Activated CD4-positive, alpha-beta memory T cell treated with anti-CD3 and anti-CD28 coated beads for 36 hours (primary cell): ENCODE measurements at regions of chr17 and their contacts with region 1.

Region 1: DNA sequence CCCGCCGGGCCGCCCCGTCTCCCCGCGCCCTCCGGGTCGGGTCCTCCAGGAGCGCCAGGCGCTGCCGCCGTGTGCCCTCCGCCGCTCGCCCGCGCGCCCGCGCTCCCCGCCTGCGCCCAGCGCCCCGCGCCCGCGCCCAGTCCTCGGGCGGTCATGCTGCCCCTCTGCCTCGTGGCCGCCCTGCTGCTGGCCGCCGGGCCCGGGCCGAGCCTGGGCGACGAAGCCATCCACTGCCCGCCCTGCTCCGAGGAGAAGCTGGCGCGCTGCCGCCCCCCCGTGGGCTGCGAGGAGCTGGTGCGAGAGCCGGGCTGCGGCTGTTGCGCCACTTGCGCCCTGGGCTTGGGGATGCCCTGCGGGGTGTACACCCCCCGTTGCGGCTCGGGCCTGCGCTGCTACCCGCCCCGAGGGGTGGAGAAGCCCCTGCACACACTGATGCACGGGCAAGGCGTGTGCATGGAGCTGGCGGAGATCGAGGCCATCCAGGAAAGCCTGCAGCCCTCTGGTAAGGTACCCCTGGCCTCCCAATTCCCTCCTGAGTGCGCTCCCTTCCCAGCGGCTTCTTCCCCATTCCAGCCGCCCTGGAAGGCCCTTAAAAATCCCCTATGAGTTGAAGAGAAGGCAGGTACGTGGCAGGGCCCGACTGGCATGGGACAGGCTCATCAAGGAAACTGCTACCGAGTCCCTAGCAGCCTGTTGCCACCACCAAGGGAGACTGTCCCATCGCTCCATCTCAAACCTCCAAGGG is 505 bp downstream of the IGFBP4 start:
- DNase-seq: peak; percentile 76
- H3K4me3 Mint-ChIP-seq: peak overlapping the region; percentile 65
- H3K27ac Mint-ChIP-seq: peak overlapping the region; percentile 82
- H3K4me1 Mint-ChIP-seq: peaks cover 41% of the 10 kb centered on the region
- H3K27me3 Mint-ChIP-seq: peaks cover 1% of the 10 kb centered on the region

Region 2: DNA sequence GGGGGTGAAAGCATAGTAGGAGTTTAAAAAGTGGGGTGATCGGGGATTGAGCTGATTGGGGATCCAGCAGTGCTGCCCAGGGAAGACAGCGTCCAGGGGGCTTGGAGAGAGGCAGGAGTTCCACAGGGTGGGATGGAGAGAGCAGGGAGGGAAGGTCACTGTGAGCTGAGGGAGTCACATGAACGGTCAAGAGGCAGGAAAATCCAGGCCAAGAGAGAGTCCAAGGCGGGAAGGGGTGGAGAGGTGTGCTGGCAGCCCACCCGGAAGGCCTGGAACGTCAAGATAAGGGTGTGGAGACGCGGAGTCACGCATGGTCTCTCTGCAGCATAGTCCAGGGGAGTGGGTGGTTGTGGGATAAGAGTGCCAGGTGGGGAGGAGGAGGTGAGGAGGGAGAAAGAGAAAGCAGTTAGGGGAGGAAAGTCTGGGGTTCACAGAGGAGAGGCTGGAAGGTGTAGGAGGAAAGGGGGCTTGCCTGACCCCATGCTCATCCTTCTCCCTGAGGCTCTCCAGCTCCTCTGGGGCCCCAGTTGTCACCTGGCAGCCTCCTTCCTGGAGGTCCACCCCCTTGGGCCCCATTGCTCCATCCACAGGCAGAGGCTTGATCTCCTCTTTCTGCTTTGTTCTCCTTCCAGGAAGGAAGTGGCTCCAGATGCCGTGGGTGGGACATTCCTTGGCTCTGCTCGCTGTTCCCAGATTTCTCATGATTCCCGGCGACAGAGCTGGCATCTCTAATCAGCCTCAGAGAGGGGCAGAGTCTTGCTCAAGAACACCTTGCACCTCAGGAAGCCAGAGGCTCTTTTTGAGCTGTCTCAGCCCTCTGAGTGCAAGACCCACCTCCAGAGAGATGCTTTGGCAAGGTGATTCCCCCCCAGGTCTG is 92.8 kb after region 1 on chr17:
- CTCF ChIA-PET with region 1: interaction called, 129 read pairs
- POLR2A ChIA-PET with region 1: interaction called, 6 read pairs
- intact Hi-C with region 1: loop called (anchors 1 kb)
- DNase-seq: no peak
- H3K4me3 Mint-ChIP-seq: no peak overlapping the region
- H3K27ac Mint-ChIP-seq: no peak overlapping the region
- H3K4me1 Mint-ChIP-seq: peaks cover 81% of the 10 kb centered on the region
- H3K27me3 Mint-ChIP-seq: no peaks in the 10 kb centered on the region